ENCODE measurements at regions of chr4 and their contacts with region 1.

Region 1: DNA sequence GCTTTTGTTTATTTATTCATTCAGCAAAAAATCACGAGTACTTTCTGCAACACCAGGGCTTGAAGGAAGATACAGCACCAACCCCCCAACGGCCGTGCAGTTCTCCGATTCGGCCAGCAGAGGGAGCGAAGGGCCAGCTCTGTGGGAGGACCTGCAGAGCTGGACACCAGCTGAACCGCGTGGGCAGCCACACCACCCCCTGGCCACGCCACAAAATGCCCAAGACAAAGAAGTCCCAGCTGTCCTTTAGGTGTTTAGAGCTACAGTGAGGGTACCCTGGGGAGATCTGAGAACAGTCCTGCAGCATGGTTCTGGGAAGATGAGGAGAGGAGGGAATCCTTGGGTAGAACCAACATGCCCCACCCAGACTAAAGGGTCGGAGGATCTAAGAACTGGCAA is 83.1 kb downstream of the RELL1 start:
- DNase-seq: peak; percentile 51 to 80 (median 56)
- H3K4me3 ChIP-seq: no peak overlapping the region
- H3K4me3 Mint-ChIP-seq: no peak overlapping the region
- H3K27ac ChIP-seq: no peak overlapping the region
- H3K27ac Mint-ChIP-seq: peak overlapping the region in 1 of 8 donors; percentile 43
- H3K4me1 ChIP-seq: peaks cover 4% of the 10 kb centered on the region
- H3K4me1 Mint-ChIP-seq: peaks cover 4 to 7% (median 5%) of the 10 kb centered on the region in 3 donors
- H3K27me3 ChIP-seq: no peaks in the 10 kb centered on the region
- H3K27me3 Mint-ChIP-seq: no peaks in the 10 kb centered on the region

Region 2: DNA sequence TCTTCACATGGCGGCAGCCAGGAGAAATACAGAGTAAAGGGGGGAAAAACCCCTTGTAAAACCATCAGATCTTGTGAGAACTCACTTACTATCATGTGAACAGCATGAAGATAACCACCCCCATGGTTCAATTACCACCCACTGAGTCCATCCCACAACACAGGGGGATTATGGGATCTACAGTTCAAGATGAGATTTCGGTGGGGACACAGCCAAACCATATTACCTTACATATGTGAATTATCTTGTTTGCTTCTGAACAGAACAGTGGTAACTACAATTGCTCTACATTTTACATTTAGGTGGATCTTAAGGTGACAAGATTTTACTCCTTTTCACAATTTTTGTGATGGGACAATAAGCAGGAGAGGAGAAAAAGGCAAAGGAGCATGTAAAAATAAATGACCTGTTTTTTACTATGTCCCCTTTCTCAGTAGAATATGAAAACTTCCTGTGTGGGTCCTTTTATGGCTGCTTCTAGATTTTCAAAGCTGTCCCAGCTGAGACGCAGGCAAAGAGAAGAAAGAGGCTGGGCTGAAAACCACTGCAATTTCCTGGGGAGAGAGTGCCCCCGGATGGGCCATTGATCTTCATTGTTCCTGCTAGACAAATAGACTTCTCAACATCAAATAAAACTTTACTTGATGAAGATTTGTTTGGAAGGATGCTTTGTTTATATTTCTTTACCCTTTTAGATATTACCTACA is 177.5 kb after region 1 on chr4:
- CTCF ChIA-PET with region 1: interaction called, 32 read pairs
- POLR2A ChIA-PET with region 1: no interaction called
- DNase-seq: peak; percentile 9 to 85 (median 63)
- H3K4me3 ChIP-seq: no peak overlapping the region
- H3K4me3 Mint-ChIP-seq: peak overlapping the region in 6 of 7 donors; percentile 3 to 37 (median 12)
- H3K27ac ChIP-seq: no peak overlapping the region
- H3K27ac Mint-ChIP-seq: peak overlapping the region; percentile 18 to 89 (median 76)
- H3K4me1 ChIP-seq: peaks cover 23% of the 10 kb centered on the region
- H3K4me1 Mint-ChIP-seq: peaks cover 16 to 18% (median 17%) of the 10 kb centered on the region in 3 donors
- H3K27me3 ChIP-seq: no peaks in the 10 kb centered on the region
- H3K27me3 Mint-ChIP-seq: peaks cover 0 to 3% of the 10 kb centered on the region in 2 donors

Measured in CD8-positive, alpha-beta memory T cell (primary cell).